T-cell (primary cell): ENCODE measurements at regions of chr14 and their contacts with region 1.

Region 1: DNA sequence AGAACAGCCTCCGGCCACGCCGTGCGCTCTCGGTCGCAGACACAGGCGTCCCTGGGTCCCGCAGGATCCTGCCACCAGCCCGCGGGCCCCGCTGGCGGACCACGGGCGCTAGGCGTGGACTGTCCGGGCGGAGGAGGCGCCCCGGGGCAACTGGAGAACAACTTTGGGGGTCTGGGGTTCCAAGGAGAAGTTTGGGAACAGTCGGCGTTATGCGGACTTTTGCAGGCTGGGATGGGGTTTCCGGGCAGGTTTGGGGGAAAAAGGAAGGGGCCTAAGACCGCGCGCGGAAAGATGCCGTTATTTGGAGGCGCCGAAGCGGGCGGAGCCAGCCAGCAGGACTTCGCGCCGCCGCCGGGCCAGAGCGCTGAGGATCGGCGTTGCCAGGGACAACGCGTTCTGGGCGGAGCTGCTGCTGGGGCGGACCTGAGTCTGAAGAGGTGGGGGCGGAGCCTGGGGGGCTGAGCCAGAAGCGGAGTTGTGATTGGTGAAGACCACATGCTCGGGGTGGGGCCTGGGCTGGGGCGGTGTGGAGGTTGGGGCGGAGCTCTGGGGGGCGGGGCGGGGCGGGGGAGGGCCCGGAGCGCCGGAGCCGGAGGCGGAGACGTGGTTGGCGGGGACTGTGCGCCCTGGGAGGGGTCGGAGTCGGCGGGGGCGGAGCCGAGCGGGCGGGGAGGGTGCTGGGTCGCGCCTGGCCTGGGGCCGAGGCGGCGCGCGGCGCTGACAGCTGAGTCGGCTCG is at the start of gene CYP46A1:
- DNase-seq: peak; percentile 96 to 100 (median 99)
- ATAC-seq: peak; percentile 92 to 95 (median 92)
- H3K4me3 ChIP-seq: peak within 1 kb of the TSS; percentile 82 to 87
- H3K4me3 Mint-ChIP-seq: peak within 1 kb of the TSS; percentile 87 to 92 (median 91)
- H3K27ac ChIP-seq: peak within 1 kb of the TSS; percentile 60
- H3K27ac Mint-ChIP-seq: peak within 1 kb of the TSS; percentile 75 to 80
- H3K4me1 ChIP-seq: peaks cover 0 to 29% of the 10 kb centered on the region in 2 experiments
- H3K4me1 Mint-ChIP-seq: peaks cover 19 to 30% (median 23%) of the 10 kb centered on the region in 3 donors
- H3K27me3 ChIP-seq: peaks cover 7 to 27% of the 10 kb centered on the region in 2 experiments
- H3K27me3 Mint-ChIP-seq: peaks cover 10 to 14% of the 10 kb centered on the region in 2 donors
- total RNA-seq, gene CYP46A1: 0.10 to 0.51 (median 0.39) TPM

Region 2: DNA sequence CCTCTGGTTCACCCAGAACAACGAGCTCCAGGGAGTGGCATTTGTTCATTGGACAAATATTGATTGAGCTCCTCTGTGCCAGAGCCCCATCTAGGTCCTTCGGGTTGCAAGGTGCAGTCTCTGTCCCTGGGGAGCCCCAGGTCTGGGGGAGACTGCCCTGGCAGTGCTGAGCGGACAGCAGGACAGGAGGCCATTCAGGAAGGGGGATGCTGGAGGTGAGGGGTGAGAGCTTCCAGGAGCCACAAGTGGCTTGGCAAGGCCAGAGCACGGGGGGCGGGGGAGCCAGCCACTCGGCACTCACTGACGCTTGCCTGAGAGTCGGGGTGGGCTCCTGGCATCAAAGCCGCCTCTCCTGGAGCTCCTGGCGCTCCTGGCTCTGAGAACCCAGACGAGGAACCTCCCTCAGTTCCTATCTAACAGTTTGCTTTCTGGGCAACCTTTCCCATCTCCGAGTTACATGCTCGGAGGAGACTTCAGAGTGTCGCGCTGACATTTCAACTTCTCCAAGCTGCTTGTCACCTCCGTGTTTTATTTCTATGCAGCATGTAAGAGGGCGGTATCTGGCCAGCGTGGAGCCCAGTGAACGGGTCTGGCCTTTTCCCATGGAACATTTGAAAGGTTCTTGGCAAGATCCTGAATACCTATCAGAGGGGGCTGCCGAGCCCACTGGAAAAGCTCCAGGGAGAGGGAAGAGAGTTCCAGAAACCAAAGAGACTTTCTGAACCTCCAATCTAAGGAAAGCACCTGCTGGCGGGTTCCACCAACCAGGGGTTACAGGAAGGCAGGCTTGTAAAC is 349.7 kb before region 1 on chr14:
- CTCF ChIA-PET with region 1: no interaction called
- POLR2A ChIA-PET with region 1: no interaction called
- DNase-seq: no peak
- ATAC-seq: no peak
- H3K4me3 ChIP-seq: no peak overlapping the region
- H3K4me3 Mint-ChIP-seq: no peak overlapping the region
- H3K27ac ChIP-seq: no peak overlapping the region
- H3K27ac Mint-ChIP-seq: no peak overlapping the region
- H3K4me1 ChIP-seq: no peaks in the 10 kb centered on the region
- H3K4me1 Mint-ChIP-seq: no peaks in the 10 kb centered on the region
- H3K27me3 ChIP-seq: peaks cover 0 to 11% of the 10 kb centered on the region in 2 experiments
- H3K27me3 Mint-ChIP-seq: peaks cover 15 to 16% of the 10 kb centered on the region in 2 donors

Region 3: DNA sequence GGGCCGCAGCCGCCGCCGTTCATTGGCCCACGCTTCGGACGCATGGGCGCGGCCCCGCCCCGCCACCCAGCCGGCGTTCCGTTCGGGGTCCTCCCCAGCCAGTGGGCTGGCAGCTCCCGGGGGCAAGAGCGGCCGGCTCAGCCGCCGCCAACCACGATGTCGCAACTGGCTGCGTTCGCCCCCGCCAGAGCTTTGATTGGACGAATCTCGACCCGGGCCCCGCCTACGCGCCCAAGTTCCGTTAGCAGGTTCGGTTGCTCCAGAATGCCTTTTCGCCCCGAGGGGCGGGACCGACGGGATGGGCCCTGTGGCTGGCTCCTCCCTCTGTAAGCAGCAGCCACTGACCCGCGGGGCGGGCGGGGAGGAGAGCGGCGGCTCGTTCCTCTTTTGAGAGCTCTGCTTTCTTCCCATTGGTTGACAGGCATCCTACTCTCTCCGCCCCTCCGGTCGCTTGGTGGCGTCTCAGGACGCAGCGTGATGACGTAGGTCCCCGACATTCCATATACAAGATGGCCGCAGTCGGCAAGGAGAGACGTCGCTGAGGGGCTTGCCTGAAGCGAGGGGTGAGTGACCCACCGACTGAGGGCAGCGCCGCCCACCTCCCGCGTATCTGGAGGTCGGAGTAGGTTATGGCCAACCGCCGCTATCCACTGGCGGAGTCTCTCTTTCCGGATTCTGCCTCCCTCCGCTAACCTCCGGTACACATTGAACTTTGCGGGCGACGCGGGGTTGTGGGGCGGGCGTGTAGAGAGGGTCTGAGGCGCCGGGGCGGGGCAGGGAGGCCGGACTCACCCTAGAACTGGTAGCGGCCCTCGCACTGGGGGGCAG is 202.7 kb before region 1 on chr14 and contains the start of gene CCNK:
- CTCF ChIA-PET with region 1: interaction called in 1 of 2 experiments, 11 read pairs
- POLR2A ChIA-PET with region 1: interaction called in 1 of 2 experiments, 24 read pairs
- DNase-seq: peak; percentile 99 to 100 (median 100)
- ATAC-seq: peak; percentile 86 to 89 (median 86)
- H3K4me3 ChIP-seq: peak within 1 kb of the TSS; percentile 96 to 99
- H3K4me3 Mint-ChIP-seq: peak within 1 kb of the TSS; percentile 90 to 98 (median 96)
- H3K27ac ChIP-seq: peak within 1 kb of the TSS; percentile 87
- H3K27ac Mint-ChIP-seq: peak within 1 kb of the TSS; percentile 95 to 98
- H3K4me1 ChIP-seq: peaks cover 20 to 23% of the 10 kb centered on the region in 2 experiments
- H3K4me1 Mint-ChIP-seq: peaks cover 65 to 67% (median 65%) of the 10 kb centered on the region in 3 donors
- H3K27me3 ChIP-seq: no peaks in the 10 kb centered on the region
- H3K27me3 Mint-ChIP-seq: no peaks in the 10 kb centered on the region
- total RNA-seq, gene CCNK: 61.8 to 138 (median 74.6) TPM

Region 4: GRCh38 chr14:99891266-99891665 is 207.5 kb after region 1 on chr14:
- CTCF ChIA-PET with region 1: interaction called in 1 of 2 experiments, 5 read pairs
- POLR2A ChIA-PET with region 1: interaction called in 1 of 2 experiments, 16 read pairs
- DNase-seq: no peak
- ATAC-seq: no peak
- H3K4me3 ChIP-seq: no peak overlapping the region
- H3K4me3 Mint-ChIP-seq: no peak overlapping the region
- H3K27ac ChIP-seq: no peak overlapping the region
- H3K27ac Mint-ChIP-seq: no peak overlapping the region
- H3K4me1 ChIP-seq: no peaks in the 10 kb centered on the region
- H3K4me1 Mint-ChIP-seq: no peaks in the 10 kb centered on the region
- H3K27me3 ChIP-seq: peaks cover 0 to 19% of the 10 kb centered on the region in 2 experiments
- H3K27me3 Mint-ChIP-seq: peaks cover 4 to 15% of the 10 kb centered on the region in 2 donors